ENCODE measurements at regions of chr18 and their contacts with region 1.

Region 1: GRCh38 chr18:49561289-49562193 is at the start of gene LIPG:
- DNase-seq: peak; percentile 8 to 44
- ATAC-seq: peak; percentile 63 to 75
- H3K4me3 ChIP-seq: peak within 1 kb of the TSS; percentile 35 to 58 (median 46)
- H3K27ac ChIP-seq: peak within 1 kb of the TSS in 1 of 4 donors; percentile 56
- H3K4me1 ChIP-seq: peaks cover 30 to 33% of the 10 kb centered on the region in 2 donors
- H3K27me3 ChIP-seq: peaks cover 21 to 30% (median 29%) of the 10 kb centered on the region in 3 donors
- CTCF ChIP-seq: no peak
- POLR2A ChIP-seq: peak; percentile 38 to 63
- total RNA-seq, gene LIPG: 0.24 to 6.4 (median 1.9) TPM

Region 2: GRCh38 chr18:49464718-49465598 is 96.6 kb before region 1 on chr18:
- in situ Hi-C with region 1: no loop called
- intact Hi-C with region 1: no loop called
- DNase-seq: no peak
- ATAC-seq: no peak
- H3K4me3 ChIP-seq: no peak overlapping the region
- H3K27ac ChIP-seq: no peak overlapping the region
- H3K4me1 ChIP-seq: no peaks in the 10 kb centered on the region
- H3K27me3 ChIP-seq: no peaks in the 10 kb centered on the region
- CTCF ChIP-seq: no peak
- POLR2A ChIP-seq: no peak

Region 3: GRCh38 chr18:49645841-49646351 is 84.4 kb after region 1 on chr18:
- in situ Hi-C with region 1: no loop called
- intact Hi-C with region 1: loop called (anchors 5 kb)
- DNase-seq: peak; percentile 35 to 76
- ATAC-seq: peak; percentile 28 to 35
- H3K4me3 ChIP-seq: no peak overlapping the region
- H3K27ac ChIP-seq: peak overlapping the region; percentile 13 to 80 (median 31)
- H3K4me1 ChIP-seq: peaks cover 15 to 26% of the 10 kb centered on the region in 2 donors
- H3K27me3 ChIP-seq: no peaks in the 10 kb centered on the region
- CTCF ChIP-seq: no peak
- POLR2A ChIP-seq: no peak

Region 4: GRCh38 chr18:49728542-49728941 is 167.0 kb after region 1 on chr18:
- in situ Hi-C with region 1: no loop called
- intact Hi-C with region 1: loop called (anchors 5 kb)
- DNase-seq: no peak
- ATAC-seq: peak in 1 of 2 donors; percentile 24
- H3K4me3 ChIP-seq: no peak overlapping the region
- H3K27ac ChIP-seq: no peak overlapping the region
- H3K4me1 ChIP-seq: peaks cover 0 to 3% of the 10 kb centered on the region in 2 donors
- H3K27me3 ChIP-seq: no peaks in the 10 kb centered on the region
- CTCF ChIP-seq: peak in 4 of 5 experiments; percentile 17 to 54 (median 27)
- POLR2A ChIP-seq: no peak

Region 5: GRCh38 chr18:49768051-49768391 is 206.5 kb after region 1 on chr18:
- in situ Hi-C with region 1: loop called in 1 of 4 experiments (anchors 25 kb)
- intact Hi-C with region 1: no loop called
- DNase-seq: peak in 1 of 2 donors; percentile 21
- ATAC-seq: no peak
- H3K4me3 ChIP-seq: no peak overlapping the region
- H3K27ac ChIP-seq: no peak overlapping the region
- H3K4me1 ChIP-seq: no peaks in the 10 kb centered on the region
- H3K27me3 ChIP-seq: no peaks in the 10 kb centered on the region
- CTCF ChIP-seq: peak in 4 of 5 experiments; percentile 15 to 52 (median 26)
- POLR2A ChIP-seq: no peak

Region 6: GRCh38 chr18:49858309-49859020 is 296.9 kb after region 1 on chr18:
- in situ Hi-C with region 1: no loop called
- intact Hi-C with region 1: loop called (anchors 2 kb)
- DNase-seq: peak; percentile 10 to 33
- ATAC-seq: peak in 1 of 2 donors; percentile 62
- H3K4me3 ChIP-seq: no peak overlapping the region
- H3K27ac ChIP-seq: no peak overlapping the region
- H3K4me1 ChIP-seq: no peaks in the 10 kb centered on the region
- H3K27me3 ChIP-seq: no peaks in the 10 kb centered on the region
- CTCF ChIP-seq: peak; percentile 74 to 86 (median 83)
- POLR2A ChIP-seq: no peak